PC-3 (cell line): ENCODE measurements at regions of chr10 and their contacts with region 1.

Region 1: GRCh38 chr10:101397140-101397539 is 43.2 kb downstream of the BTRC start:
- DNase-seq: no peak
- ATAC-seq: no peak
- H3K4me3 ChIP-seq: no peak overlapping the region
- H3K27ac ChIP-seq: no peak overlapping the region
- H3K4me1 ChIP-seq: 0 out of 2 replicates have a peak, but pooled peaks cover 3% of the 10 kb centered on the region
- H3K27me3 ChIP-seq: no peaks in the 10 kb centered on the region
- CTCF ChIP-seq: no peak

Region 2: GRCh38 chr10:101380353-101381017 is 16.7 kb before region 1 on chr10:
- CTCF ChIA-PET with region 1: no interaction called
- POLR2A ChIA-PET with region 1: interaction called, 13 read pairs
- intact Hi-C with region 1: no loop called
- DNase-seq: peak; percentile 19
- ATAC-seq: no peak
- H3K4me3 ChIP-seq: no peak overlapping the region
- H3K27ac ChIP-seq: no peak overlapping the region
- H3K4me1 ChIP-seq: no peaks in the 10 kb centered on the region
- H3K27me3 ChIP-seq: no peaks in the 10 kb centered on the region
- CTCF ChIP-seq: no peak

Region 3: GRCh38 chr10:101411598-101411997 is 14.5 kb after region 1 on chr10:
- CTCF ChIA-PET with region 1: no interaction called
- POLR2A ChIA-PET with region 1: no interaction called
- intact Hi-C with region 1: no loop called
- DNase-seq: no peak
- ATAC-seq: no peak
- H3K4me3 ChIP-seq: no peak overlapping the region
- H3K27ac ChIP-seq: no peak overlapping the region
- H3K4me1 ChIP-seq: no peaks in the 10 kb centered on the region
- H3K27me3 ChIP-seq: no peaks in the 10 kb centered on the region
- CTCF ChIP-seq: no peak